ENCODE measurements at regions of chr14 and their contacts with region 1.

Region 1: DNA sequence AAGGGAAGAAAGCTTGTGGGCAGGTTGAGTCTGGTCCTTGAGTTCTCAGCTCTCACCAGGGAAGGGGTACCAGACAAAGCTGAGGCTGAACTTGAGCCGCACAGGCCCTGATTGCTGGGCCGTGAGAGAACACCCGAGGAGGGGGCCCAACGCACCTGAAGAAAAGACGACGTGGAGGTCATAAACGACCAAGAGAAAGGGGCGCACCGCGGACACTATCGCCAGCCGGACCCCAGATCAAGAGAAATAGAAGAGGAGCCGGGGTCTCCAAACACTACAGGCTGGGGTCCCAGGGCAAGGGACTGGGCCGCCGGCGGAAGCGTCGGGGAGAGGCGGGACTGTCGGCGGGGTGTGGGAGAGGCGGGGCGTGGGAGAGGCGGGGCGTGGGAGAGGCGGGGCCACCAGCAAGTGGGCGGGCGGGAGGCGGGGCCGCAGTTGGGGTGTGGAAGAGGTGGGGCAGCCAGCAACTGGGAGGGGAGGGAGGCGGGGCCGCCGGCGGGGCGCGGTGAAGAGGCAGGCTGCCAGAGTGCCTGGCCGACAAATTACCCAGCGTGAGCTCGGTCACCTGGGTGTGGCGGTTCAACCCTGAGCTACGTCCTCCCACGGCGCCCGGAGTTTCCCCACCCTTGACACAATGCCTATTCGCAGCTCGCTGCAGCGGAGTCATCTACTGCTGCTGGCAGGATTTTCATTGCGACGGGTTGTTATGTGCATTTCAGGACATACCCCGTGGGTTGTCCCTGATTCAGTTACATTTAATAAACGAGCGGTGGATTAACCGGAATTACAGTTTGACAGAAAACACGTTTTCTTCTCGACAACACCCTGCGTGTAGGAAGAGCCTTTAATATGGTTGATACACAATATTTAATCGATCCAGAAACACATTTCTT is 15.5 kb upstream of the NEMF start:
- DNase-seq: peak; percentile 99
- H3K4me3 Mint-ChIP-seq: peak overlapping the region; percentile 92
- H3K27ac Mint-ChIP-seq: peak overlapping the region; percentile 94
- H3K4me1 Mint-ChIP-seq: peaks cover 20% of the 10 kb centered on the region
- H3K27me3 Mint-ChIP-seq: no peaks in the 10 kb centered on the region

Region 2: DNA sequence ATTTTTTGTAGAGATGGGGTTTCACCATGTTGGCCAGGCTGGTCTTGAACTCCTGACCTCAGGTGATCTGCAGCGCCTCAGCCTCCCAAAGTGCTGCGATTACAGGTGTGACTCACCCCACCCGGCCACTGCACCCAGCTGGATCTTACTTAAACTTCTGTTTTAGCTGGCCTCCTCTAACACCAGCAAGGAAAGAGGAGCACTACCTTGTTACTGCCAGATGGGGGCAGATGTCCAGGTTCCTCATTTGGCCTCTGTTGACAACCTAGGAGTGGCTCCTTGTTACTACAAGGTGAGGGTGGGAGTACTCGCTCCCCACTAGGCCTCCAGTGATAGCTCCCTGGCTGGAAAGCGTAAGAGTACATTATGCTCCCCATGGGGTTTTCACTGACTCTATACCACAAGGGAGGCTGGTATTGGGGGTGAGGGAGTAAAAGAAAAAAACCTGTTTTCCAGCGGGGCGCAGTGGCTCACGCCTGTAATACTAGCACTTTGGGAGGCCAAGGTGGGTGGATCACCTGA is 11.7 kb after region 1 on chr14:
- CTCF ChIA-PET with region 1: interaction called, 17 read pairs
- intact Hi-C with region 1: no loop called
- DNase-seq: peak; percentile 79
- H3K4me3 Mint-ChIP-seq: no peak overlapping the region
- H3K27ac Mint-ChIP-seq: peak overlapping the region; percentile 30
- H3K4me1 Mint-ChIP-seq: peaks cover 17% of the 10 kb centered on the region
- H3K27me3 Mint-ChIP-seq: no peaks in the 10 kb centered on the region

Region 3: GRCh38 chr14:49946320-49947141 is 78.5 kb after region 1 on chr14:
- CTCF ChIA-PET with region 1: interaction called, 3 read pairs
- intact Hi-C with region 1: loop called (anchors 1 kb)
- DNase-seq: peak; percentile 51
- H3K4me3 Mint-ChIP-seq: peak overlapping the region; percentile 44
- H3K27ac Mint-ChIP-seq: peak overlapping the region; percentile 62
- H3K4me1 Mint-ChIP-seq: peaks cover 64% of the 10 kb centered on the region
- H3K27me3 Mint-ChIP-seq: no peaks in the 10 kb centered on the region

Region 4: DNA sequence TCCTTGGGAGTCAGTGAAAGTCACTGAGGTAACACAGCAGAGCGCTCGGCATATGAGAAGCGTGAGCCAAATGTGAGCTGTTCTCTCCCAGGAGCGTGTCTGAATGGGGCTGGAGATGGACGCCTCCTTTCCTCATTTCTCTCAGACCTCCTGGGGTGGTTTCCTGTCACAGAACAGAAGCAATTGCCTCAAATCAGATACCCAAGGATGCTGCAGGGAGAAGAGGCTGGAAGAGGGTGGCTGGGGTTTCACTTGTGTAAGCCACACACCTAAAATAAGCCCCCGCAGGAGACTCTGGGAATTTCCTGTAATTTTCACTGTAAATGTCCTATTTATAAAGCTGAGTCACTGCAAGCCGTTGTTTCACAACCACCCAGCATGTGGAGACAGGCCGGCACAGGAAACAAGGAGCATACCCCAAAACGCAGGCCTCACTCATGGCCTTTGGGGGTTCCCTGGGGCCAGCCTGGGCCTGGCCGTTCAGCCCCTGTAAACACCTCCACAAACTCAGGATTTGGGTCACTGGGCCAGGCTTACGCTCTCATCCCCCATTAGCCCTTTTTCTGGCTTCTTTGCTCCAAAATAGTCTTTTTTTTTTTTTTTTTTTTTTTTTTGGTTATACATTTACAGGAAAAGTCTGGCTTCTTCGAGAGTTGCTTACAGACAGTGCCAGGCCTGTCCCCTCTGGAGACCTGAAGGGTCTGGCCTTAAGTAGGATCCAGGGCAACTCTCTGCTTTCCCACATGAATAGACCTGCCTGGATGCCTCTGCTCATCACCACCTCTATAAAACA is 193.0 kb after region 1 on chr14:
- CTCF ChIA-PET with region 1: interaction called, 17 read pairs
- intact Hi-C with region 1: loop called (anchors 1 kb)
- DNase-seq: peak; percentile 64
- H3K4me3 Mint-ChIP-seq: peak overlapping the region; percentile 85
- H3K27ac Mint-ChIP-seq: peak overlapping the region; percentile 98
- H3K4me1 Mint-ChIP-seq: peaks cover 75% of the 10 kb centered on the region
- H3K27me3 Mint-ChIP-seq: no peaks in the 10 kb centered on the region

Region 5: GRCh38 chr14:50109342-50109741 is 241.3 kb after region 1 on chr14:
- CTCF ChIA-PET with region 1: interaction called, 49 read pairs
- intact Hi-C with region 1: loop called (anchors 1 kb)
- DNase-seq: no peak
- H3K4me3 Mint-ChIP-seq: no peak overlapping the region
- H3K27ac Mint-ChIP-seq: peak overlapping the region; percentile 59
- H3K4me1 Mint-ChIP-seq: peaks cover 43% of the 10 kb centered on the region
- H3K27me3 Mint-ChIP-seq: no peaks in the 10 kb centered on the region

Region 6: GRCh38 chr14:50532502-50533240 is 664.6 kb after region 1 on chr14 and contains the start of gene MAP4K5:
- CTCF ChIA-PET with region 1: no interaction called
- intact Hi-C with region 1: loop called (anchors 1 kb)
- DNase-seq: peak; percentile 89
- H3K4me3 Mint-ChIP-seq: peak within 1 kb of the TSS; percentile 85
- H3K27ac Mint-ChIP-seq: peak within 1 kb of the TSS; percentile 72
- H3K4me1 Mint-ChIP-seq: peaks cover 45% of the 10 kb centered on the region
- H3K27me3 Mint-ChIP-seq: no peaks in the 10 kb centered on the region
- total RNA-seq, gene MAP4K5: 10.2 to 11.2 TPM